ENCODE measurements at regions of chr6 and their contacts with region 1.

Region 1: DNA sequence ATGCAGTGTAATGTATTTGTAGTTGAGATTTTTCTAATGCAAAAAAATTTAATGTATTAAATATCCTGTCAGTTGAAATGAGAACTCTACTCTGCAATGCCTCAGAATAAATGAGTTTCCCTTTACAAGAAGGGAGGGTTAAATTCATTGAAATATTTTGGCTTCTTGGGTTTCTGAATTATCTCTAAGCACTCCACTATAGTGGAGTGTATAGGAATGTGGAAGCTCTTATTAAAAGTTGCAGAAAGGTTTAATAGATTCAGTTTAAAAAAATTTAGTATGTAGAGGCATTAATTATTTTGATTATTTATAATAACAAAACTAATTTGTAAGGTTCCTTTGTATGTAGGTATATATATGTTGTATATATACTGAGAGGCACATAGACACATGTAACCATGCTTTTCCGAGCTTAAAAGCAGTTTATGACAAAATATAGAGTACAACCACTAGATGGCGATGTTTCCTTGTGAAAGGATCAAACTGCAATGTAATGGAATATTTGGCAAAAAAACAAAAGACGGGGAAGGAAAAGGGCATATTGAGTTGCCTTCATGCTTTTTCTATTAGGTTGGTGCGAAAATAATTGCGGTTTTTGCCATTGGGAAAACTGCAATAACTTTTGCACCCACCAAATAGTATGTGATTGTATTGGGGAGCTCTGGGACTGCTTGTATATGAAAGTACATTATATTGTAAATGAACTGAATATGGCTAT is 144.2 kb downstream of the MYO6 start:
- DNase-seq: peak; percentile 72
- H3K4me3 Mint-ChIP-seq: no peak overlapping the region
- H3K27ac Mint-ChIP-seq: no peak overlapping the region
- H3K4me1 Mint-ChIP-seq: peaks cover 10% of the 10 kb centered on the region
- H3K27me3 Mint-ChIP-seq: no peaks in the 10 kb centered on the region
- CTCF ChIP-seq: peak; percentile 62

Region 2: GRCh38 chr6:75791881-75792280 is 101.3 kb before region 1 on chr6:
- CTCF ChIA-PET with region 1: no interaction called
- POLR2A ChIA-PET with region 1: no interaction called
- intact Hi-C with region 1: no loop called
- DNase-seq: peak; percentile 38
- H3K4me3 Mint-ChIP-seq: no peak overlapping the region
- H3K27ac Mint-ChIP-seq: no peak overlapping the region
- H3K4me1 Mint-ChIP-seq: peaks cover 6% of the 10 kb centered on the region
- H3K27me3 Mint-ChIP-seq: no peaks in the 10 kb centered on the region
- CTCF ChIP-seq: no peak

Region 3: DNA sequence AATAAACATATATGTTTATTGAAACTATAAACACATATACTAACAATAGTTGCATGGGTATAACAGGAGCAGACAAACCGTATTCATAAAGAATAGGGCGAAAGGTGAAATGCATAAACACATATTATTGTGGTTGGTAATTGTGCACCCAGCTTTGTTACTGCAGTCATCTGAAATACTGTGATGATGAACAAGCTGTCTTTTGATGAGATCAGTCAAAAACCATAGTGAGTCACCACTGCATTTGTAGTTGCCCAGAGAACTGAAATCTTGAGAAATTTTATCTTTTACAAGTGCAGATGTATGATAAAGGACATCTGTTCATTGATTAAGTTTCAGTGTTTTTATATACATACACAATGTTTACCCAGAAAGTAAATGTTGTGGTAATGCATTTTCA is 10.5 kb before region 1 on chr6:
- CTCF ChIA-PET with region 1: interaction called, 80 read pairs
- POLR2A ChIA-PET with region 1: interaction called, 4 read pairs
- intact Hi-C with region 1: no loop called
- DNase-seq: peak; percentile 50
- H3K4me3 Mint-ChIP-seq: no peak overlapping the region
- H3K27ac Mint-ChIP-seq: no peak overlapping the region
- H3K4me1 Mint-ChIP-seq: no peaks in the 10 kb centered on the region
- H3K27me3 Mint-ChIP-seq: no peaks in the 10 kb centered on the region
- CTCF ChIP-seq: no peak

Region 4: DNA sequence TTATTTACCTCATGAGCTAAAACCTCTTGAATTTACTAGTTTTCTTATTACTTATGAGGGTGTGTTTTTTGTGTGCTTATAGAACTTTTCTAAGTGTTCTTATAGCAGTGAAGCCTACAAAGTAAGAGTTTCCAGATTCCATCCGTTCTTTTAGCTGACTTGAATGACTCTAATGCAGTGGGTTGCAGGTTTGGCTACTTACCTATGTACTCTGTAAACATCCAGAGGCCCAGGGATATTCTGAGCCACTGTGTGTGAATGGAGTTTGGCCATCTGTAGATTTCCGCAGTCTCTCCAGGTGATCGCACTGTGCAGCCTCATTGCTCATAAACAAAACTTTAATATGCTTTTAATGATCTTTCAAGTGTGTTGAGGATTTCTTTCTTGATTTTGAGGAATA is 13.7 kb after region 1 on chr6:
- CTCF ChIA-PET with region 1: interaction called, 41 read pairs
- POLR2A ChIA-PET with region 1: interaction called, 3 read pairs
- intact Hi-C with region 1: no loop called
- DNase-seq: no peak
- H3K4me3 Mint-ChIP-seq: no peak overlapping the region
- H3K27ac Mint-ChIP-seq: no peak overlapping the region
- H3K4me1 Mint-ChIP-seq: no peaks in the 10 kb centered on the region
- H3K27me3 Mint-ChIP-seq: no peaks in the 10 kb centered on the region
- CTCF ChIP-seq: no peak

Region 5: GRCh38 chr6:76682842-76683241 is 789.6 kb after region 1 on chr6:
- CTCF ChIA-PET with region 1: interaction called, 6 read pairs
- POLR2A ChIA-PET with region 1: interaction called, 3 read pairs
- intact Hi-C with region 1: loop called (anchors 5 kb)
- DNase-seq: peak; percentile 32
- H3K4me3 Mint-ChIP-seq: no peak overlapping the region
- H3K27ac Mint-ChIP-seq: no peak overlapping the region
- H3K4me1 Mint-ChIP-seq: no peaks in the 10 kb centered on the region
- H3K27me3 Mint-ChIP-seq: no peaks in the 10 kb centered on the region
- CTCF ChIP-seq: peak; percentile 36

Region 6: DNA sequence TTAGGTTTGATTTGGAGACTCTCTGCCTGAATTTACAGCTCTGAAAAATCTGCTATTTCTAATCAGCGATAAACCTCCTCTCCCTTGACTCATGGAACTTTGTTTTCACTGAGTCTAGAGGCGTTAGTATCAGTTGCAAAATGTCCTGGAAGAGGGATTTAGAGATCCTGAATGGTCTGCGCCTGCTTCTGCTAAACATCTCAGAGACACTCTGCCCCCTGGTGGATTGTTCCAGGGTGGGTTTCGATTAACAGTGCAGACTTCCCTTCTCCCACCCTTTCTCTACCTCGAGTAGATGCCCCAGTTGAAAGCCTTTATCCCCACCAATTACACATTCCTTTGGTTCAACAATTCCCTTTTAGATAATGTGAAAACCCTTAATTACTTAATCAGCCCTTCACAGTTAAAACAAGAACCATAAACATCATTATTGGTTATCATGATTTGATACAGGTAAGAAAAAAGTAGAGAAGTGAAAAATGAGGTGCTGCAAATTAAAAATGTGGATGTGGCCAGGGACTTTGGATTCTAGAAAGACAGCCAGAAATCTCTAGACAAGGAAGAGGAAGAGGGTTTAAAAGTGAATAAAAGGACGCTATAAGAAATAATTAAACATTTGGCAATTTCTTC is 1564.6 kb after region 1 on chr6:
- CTCF ChIA-PET with region 1: interaction called, 5 read pairs
- POLR2A ChIA-PET with region 1: no interaction called
- intact Hi-C with region 1: loop called (anchors 1 kb)
- DNase-seq: peak; percentile 95
- H3K4me3 Mint-ChIP-seq: no peak overlapping the region
- H3K27ac Mint-ChIP-seq: peak overlapping the region; percentile 4
- H3K4me1 Mint-ChIP-seq: peaks cover 11% of the 10 kb centered on the region
- H3K27me3 Mint-ChIP-seq: no peaks in the 10 kb centered on the region
- CTCF ChIP-seq: peak; percentile 54

Measured in MCF 10A (cell line).